Prostate gland (tissue), 2 donors: ENCODE measurements at regions of chr12 and their contacts with region 1.

Region 1: GRCh38 chr12:45745861-45746277 is 16.4 kb downstream of the ARID2 start:
- DNase-seq: no peak
- H3K4me3 ChIP-seq: no peak overlapping the region
- H3K27ac ChIP-seq: no peak overlapping the region
- H3K4me1 ChIP-seq: no peaks in the 10 kb centered on the region
- H3K27me3 ChIP-seq: no peaks in the 10 kb centered on the region
- CTCF ChIP-seq: peak in 1 of 4 experiments; percentile 13
- POLR2A ChIP-seq: no peak

Region 2: DNA sequence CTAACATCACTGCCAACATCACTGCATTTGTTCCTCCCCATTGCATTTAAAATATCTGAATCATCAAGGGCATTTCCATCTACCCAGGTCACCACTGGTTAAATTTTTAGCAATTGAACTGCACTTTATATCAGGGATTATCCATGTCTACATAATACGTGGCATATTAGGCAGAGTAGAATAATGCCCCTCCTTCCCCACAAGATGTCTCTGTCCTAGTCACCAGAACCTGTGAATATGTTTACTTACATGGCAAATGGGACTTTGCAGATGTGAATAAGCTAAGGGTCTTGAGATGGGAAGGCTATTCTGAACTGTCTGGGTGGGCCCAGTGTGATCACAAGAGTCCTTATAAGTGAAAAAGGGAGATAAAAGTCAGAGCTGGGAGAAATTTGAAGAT is 198.0 kb before region 1 on chr12:
- intact Hi-C with region 1: loop called (anchors 5 kb)
- DNase-seq: no peak
- H3K4me3 ChIP-seq: no peak overlapping the region
- H3K27ac ChIP-seq: no peak overlapping the region
- H3K4me1 ChIP-seq: no peaks in the 10 kb centered on the region
- H3K27me3 ChIP-seq: no peaks in the 10 kb centered on the region
- CTCF ChIP-seq: no peak
- POLR2A ChIP-seq: no peak

Region 3: GRCh38 chr12:45695015-45695414 is 50.9 kb before region 1 on chr12:
- intact Hi-C with region 1: no loop called
- DNase-seq: no peak
- H3K4me3 ChIP-seq: no peak overlapping the region
- H3K27ac ChIP-seq: no peak overlapping the region
- H3K4me1 ChIP-seq: no peaks in the 10 kb centered on the region
- H3K27me3 ChIP-seq: no peaks in the 10 kb centered on the region
- CTCF ChIP-seq: no peak
- POLR2A ChIP-seq: no peak